CD4-positive, alpha-beta T cell (primary cell): ENCODE measurements at regions of chr17 and their contacts with region 1.

Region 1: DNA sequence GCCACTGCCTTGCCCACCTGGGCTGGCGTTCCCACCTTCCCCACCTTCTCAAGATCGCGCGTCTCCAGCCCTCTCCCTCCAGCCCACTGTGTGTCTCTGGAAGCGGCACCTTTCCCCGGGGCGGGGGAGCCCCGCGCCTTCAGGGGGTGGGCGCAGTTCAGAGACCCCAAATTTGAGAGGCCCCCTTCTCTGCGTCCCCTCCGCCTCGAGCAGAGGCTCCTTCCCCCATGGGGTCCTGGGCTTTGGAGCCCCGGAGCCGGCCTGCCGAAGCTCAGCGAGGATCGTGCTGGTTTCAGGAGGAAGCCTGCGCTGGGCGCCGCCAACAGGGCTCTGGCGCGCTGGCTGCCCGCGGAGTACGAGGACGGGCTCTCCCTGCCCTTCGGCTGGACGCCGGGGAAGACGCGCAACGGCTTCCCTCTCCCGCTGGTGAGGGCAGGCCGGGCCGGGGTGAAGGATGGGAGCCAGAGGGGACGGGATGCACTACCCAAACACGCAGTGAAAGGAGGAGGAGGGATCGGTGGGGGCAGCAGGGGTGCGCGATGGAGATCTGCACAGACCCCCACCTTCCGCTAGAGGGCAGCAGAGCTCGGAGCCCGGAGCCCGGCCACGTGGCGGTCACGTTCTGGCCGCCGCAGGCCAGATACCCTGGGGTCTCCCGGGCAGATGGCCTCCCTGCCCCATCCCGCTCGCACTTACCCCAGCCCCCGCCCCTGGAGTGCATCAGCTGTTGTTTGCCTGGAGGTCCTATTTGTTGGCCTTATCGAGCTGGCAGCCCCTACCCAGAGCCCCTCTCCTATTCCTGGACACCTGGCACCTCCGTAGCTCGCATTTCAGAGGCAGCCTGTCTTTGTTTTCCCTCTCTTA is 11.1 kb downstream of the LPO start:
- DNase-seq: peak; percentile 54 to 86 (median 66)
- ATAC-seq: peak; percentile 95
- H3K4me3 ChIP-seq: peak overlapping the region; percentile 56
- H3K4me3 Mint-ChIP-seq: peak overlapping the region; percentile 74
- H3K27ac ChIP-seq: no peak overlapping the region
- H3K27ac Mint-ChIP-seq: no peak overlapping the region
- H3K4me1 ChIP-seq: peaks cover 18% of the 10 kb centered on the region
- H3K4me1 Mint-ChIP-seq: peaks cover 11% of the 10 kb centered on the region
- H3K27me3 ChIP-seq: peaks cover 5 to 8% of the 10 kb centered on the region in 2 experiments
- H3K27me3 Mint-ChIP-seq: peaks cover 34% of the 10 kb centered on the region
- CTCF ChIP-seq: peak; percentile 98

Region 2: DNA sequence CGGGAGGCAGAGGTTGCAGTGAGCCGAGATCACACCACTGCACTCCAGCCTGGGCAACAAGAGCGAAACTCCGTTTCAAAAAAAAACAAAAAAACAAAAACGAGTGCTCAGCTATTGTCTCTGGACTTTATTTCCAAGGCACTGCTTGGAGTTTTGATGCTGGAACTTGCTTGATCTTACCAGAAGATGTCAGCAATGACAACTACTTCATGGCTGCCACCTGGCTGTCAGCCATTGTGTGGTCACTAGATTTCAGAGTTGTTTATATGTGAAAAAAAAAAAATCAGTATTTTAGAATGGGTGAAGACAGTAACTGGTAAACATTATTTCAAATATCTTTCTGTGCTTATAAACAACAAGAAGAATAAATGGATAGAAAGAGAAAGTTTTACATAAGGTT is 127.6 kb before region 1 on chr17:
- CTCF ChIA-PET with region 1: no interaction called
- POLR2A ChIA-PET with region 1: no interaction called
- intact Hi-C with region 1: loop called in 1 of 2 experiments (anchors 1 kb)
- DNase-seq: peak in 13 of 14 experiments; percentile 3 to 82 (median 38)
- ATAC-seq: peak; percentile 87
- H3K4me3 ChIP-seq: no peak overlapping the region
- H3K4me3 Mint-ChIP-seq: no peak overlapping the region
- H3K27ac ChIP-seq: no peak overlapping the region
- H3K27ac Mint-ChIP-seq: no peak overlapping the region
- H3K4me1 ChIP-seq: no peaks in the 10 kb centered on the region
- H3K4me1 Mint-ChIP-seq: peaks cover 15% of the 10 kb centered on the region
- H3K27me3 ChIP-seq: peaks cover 0 to 2% of the 10 kb centered on the region in 2 experiments
- H3K27me3 Mint-ChIP-seq: peaks cover 9% of the 10 kb centered on the region
- CTCF ChIP-seq: peak; percentile 82

Region 3: DNA sequence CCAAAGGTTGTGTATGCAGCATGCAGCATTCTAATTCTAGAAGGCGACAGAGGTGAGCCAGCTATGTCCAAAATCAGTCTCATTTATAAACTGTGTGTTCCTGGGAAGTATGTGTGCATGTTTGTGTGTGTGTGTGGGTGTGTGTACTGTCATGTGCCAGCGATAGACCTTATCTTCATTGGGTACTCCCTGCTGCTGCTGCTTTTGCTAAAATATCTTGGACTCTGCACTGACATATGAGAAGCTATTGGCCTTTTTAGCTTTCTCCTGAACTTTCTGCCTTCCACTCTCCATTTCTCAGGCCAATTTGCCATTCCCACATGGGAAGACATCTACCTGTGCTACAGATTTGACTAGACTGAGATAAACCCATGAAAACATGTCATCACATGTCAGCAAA is 13.1 kb before region 1 on chr17:
- CTCF ChIA-PET with region 1: interaction called, 10 read pairs
- POLR2A ChIA-PET with region 1: no interaction called
- intact Hi-C with region 1: no loop called
- DNase-seq: no peak
- ATAC-seq: no peak
- H3K4me3 ChIP-seq: no peak overlapping the region
- H3K4me3 Mint-ChIP-seq: no peak overlapping the region
- H3K27ac ChIP-seq: no peak overlapping the region
- H3K27ac Mint-ChIP-seq: no peak overlapping the region
- H3K4me1 ChIP-seq: no peaks in the 10 kb centered on the region
- H3K4me1 Mint-ChIP-seq: no peaks in the 10 kb centered on the region
- H3K27me3 ChIP-seq: peaks cover 18 to 22% of the 10 kb centered on the region in 2 experiments
- H3K27me3 Mint-ChIP-seq: peaks cover 65% of the 10 kb centered on the region
- CTCF ChIP-seq: no peak

Region 4: GRCh38 chr17:58447039-58447975 is 197.8 kb after region 1 on chr17:
- CTCF ChIA-PET with region 1: interaction called, 3 read pairs
- POLR2A ChIA-PET with region 1: no interaction called
- intact Hi-C with region 1: loop called in 1 of 2 experiments (anchors 1 kb)
- DNase-seq: peak; percentile 36 to 81 (median 50)
- ATAC-seq: peak; percentile 69
- H3K4me3 ChIP-seq: no peak overlapping the region
- H3K4me3 Mint-ChIP-seq: no peak overlapping the region
- H3K27ac ChIP-seq: no peak overlapping the region
- H3K27ac Mint-ChIP-seq: no peak overlapping the region
- H3K4me1 ChIP-seq: no peaks in the 10 kb centered on the region
- H3K4me1 Mint-ChIP-seq: no peaks in the 10 kb centered on the region
- H3K27me3 ChIP-seq: no peaks in the 10 kb centered on the region
- H3K27me3 Mint-ChIP-seq: no peaks in the 10 kb centered on the region
- CTCF ChIP-seq: peak; percentile 57